Activated B cell treated with CpG ODN at 0.5 μM for 24 hours (primary cell): ENCODE measurements at regions of chrX and their contacts with region 1.

Region 1: GRCh38 chrX:154370882-154371770 is 3.3 kb downstream of the FLNA start:
- DNase-seq: peak; percentile 76
- ATAC-seq: peak; percentile 64
- H3K4me3 Mint-ChIP-seq: peak overlapping the region; percentile 84
- H3K27ac Mint-ChIP-seq: peak overlapping the region; percentile 69
- H3K4me1 Mint-ChIP-seq: peaks cover 34% of the 10 kb centered on the region
- H3K27me3 Mint-ChIP-seq: no peaks in the 10 kb centered on the region
- CTCF ChIP-seq: no peak

Region 2: GRCh38 chrX:154097597-154098541 is 273.3 kb before region 1 on chrX and contains the start of gene MECP2:
- CTCF ChIA-PET with region 1: no interaction called
- POLR2A ChIA-PET with region 1: no interaction called
- intact Hi-C with region 1: loop called (anchors 5 kb)
- DNase-seq: peak; percentile 75
- ATAC-seq: peak; percentile 93
- H3K4me3 Mint-ChIP-seq: peak within 1 kb of the TSS; percentile 90
- H3K27ac Mint-ChIP-seq: peak within 1 kb of the TSS; percentile 85
- H3K4me1 Mint-ChIP-seq: peaks cover 39% of the 10 kb centered on the region
- H3K27me3 Mint-ChIP-seq: peaks cover 2% of the 10 kb centered on the region
- CTCF ChIP-seq: no peak
- total RNA-seq, gene MECP2: 56.8 and 69.0 TPM in 2 replicates

Region 3: GRCh38 chrX:154357197-154357596 is 13.9 kb before region 1 on chrX:
- CTCF ChIA-PET with region 1: no interaction called
- POLR2A ChIA-PET with region 1: interaction called, 56 read pairs
- intact Hi-C with region 1: no loop called
- DNase-seq: no peak
- ATAC-seq: no peak
- H3K4me3 Mint-ChIP-seq: no peak overlapping the region
- H3K27ac Mint-ChIP-seq: no peak overlapping the region
- H3K4me1 Mint-ChIP-seq: peaks cover 4% of the 10 kb centered on the region
- H3K27me3 Mint-ChIP-seq: no peaks in the 10 kb centered on the region
- CTCF ChIP-seq: no peak

Region 4: DNA sequence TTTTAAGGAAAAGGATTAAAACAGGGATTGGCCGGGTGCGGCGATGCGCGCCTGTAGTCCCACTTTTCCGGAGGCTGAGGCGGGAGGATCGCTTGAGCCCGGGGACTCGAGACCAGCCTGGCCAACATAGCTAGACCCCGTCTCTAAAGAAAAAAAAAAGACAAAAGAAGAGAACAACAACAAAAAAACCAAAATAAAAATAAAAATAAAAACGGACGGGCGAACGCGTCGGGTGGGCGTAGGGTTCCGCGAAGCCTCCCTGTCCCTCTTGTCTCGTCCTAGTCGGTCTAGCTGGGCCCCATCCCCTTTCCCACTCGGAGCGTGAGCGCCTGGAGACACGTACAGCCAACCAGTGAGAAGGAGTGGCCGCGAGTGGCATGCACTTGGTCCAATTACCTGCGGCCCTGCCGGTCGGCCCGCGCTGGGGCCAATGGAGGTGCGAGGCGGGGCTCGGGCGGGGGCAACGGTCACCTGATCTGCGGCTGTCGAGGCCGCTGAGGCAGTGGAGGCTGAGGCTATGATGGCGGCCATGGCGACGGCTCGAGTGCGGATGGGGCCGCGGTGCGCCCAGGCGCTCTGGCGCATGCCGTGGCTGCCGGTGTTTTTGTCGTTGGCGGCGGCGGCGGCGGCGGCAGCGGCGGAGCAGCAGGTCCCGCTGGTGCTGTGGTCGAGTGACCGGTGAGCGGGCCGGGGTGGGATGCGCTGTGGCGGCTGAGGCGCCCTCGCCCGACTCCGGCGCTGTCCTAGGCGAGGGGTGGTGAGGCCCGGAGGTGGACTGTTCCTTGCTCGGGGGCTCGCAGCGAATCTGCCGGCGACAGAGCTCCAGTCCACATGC is 57.3 kb after region 1 on chrX and contains the start of gene ATP6AP1:
- CTCF ChIA-PET with region 1: no interaction called
- POLR2A ChIA-PET with region 1: interaction called, 4 read pairs
- intact Hi-C with region 1: loop called (anchors 2 kb)
- DNase-seq: peak; percentile 77
- ATAC-seq: peak; percentile 99
- H3K4me3 Mint-ChIP-seq: peak within 1 kb of the TSS; percentile 81
- H3K27ac Mint-ChIP-seq: peak within 1 kb of the TSS; percentile 71
- H3K4me1 Mint-ChIP-seq: peaks cover 23% of the 10 kb centered on the region
- H3K27me3 Mint-ChIP-seq: no peaks in the 10 kb centered on the region
- CTCF ChIP-seq: no peak
- total RNA-seq, gene ATP6AP1: 36.6 and 38.8 TPM in 2 replicates

Region 5: GRCh38 chrX:154490414-154491083 is 119.4 kb after region 1 on chrX and contains the start of gene SLC10A3:
- CTCF ChIA-PET with region 1: interaction called, 4 read pairs
- POLR2A ChIA-PET with region 1: interaction called, 16 read pairs
- intact Hi-C with region 1: no loop called
- DNase-seq: peak; percentile 77
- ATAC-seq: peak; percentile 82
- H3K4me3 Mint-ChIP-seq: peak within 1 kb of the TSS; percentile 88
- H3K27ac Mint-ChIP-seq: peak within 1 kb of the TSS; percentile 93
- H3K4me1 Mint-ChIP-seq: peaks cover 10% of the 10 kb centered on the region
- H3K27me3 Mint-ChIP-seq: no peaks in the 10 kb centered on the region
- CTCF ChIP-seq: no peak
- total RNA-seq, gene SLC10A3: 13.4 and 17.1 TPM in 2 replicates

Region 6: GRCh38 chrX:154534862-154535670 is 163.9 kb after region 1 on chrX:
- CTCF ChIA-PET with region 1: interaction called, 8 read pairs
- POLR2A ChIA-PET with region 1: interaction called, 6 read pairs
- intact Hi-C with region 1: loop called (anchors 1 kb)
- DNase-seq: peak; percentile 77
- ATAC-seq: peak; percentile 96
- H3K4me3 Mint-ChIP-seq: no peak overlapping the region
- H3K27ac Mint-ChIP-seq: peak overlapping the region; percentile 50
- H3K4me1 Mint-ChIP-seq: peaks cover 3% of the 10 kb centered on the region
- H3K27me3 Mint-ChIP-seq: no peaks in the 10 kb centered on the region
- CTCF ChIP-seq: peak; percentile 30